SK-N-SH (cell line): ENCODE measurements at regions of chr5 and their contacts with region 1.

Region 1: GRCh38 chr5:180161420-180162303 is 47.3 kb downstream of the RASGEF1C start:
- DNase-seq: peak; percentile 80
- H3K4me3 ChIP-seq: peak overlapping the region in 1 of 2 experiments; percentile 19; a peak in 1 of 4 replicates
- H3K27ac ChIP-seq: no peak overlapping the region
- H3K4me1 ChIP-seq: peaks cover 0 to 11% of the 10 kb centered on the region in 2 experiments; a peak in 1 of 4 replicates
- H3K27me3 ChIP-seq: no peaks in the 10 kb centered on the region
- CTCF ChIP-seq: no peak
- EP300 ChIP-seq: no peak
- RAD21 ChIP-seq: peak; percentile 66

Region 2: GRCh38 chr5:180172450-180173197 is 11.0 kb after region 1 on chr5:
- CTCF ChIA-PET with region 1: interaction called, 10 read pairs
- POLR2A ChIA-PET with region 1: no interaction called
- DNase-seq: peak; percentile 82
- H3K4me3 ChIP-seq: no peak overlapping the region
- H3K27ac ChIP-seq: peak overlapping the region in 1 of 2 experiments; percentile 6; a peak in 1 of 4 replicates
- H3K4me1 ChIP-seq: peaks cover 0 to 24% of the 10 kb centered on the region in 2 experiments; a peak in 1 of 4 replicates
- H3K27me3 ChIP-seq: no peaks in the 10 kb centered on the region
- CTCF ChIP-seq: no peak
- EP300 ChIP-seq: no peak
- RAD21 ChIP-seq: no peak

Region 3: GRCh38 chr5:180201051-180201987 is 39.7 kb after region 1 on chr5:
- CTCF ChIA-PET with region 1: interaction called, 52 read pairs
- POLR2A ChIA-PET with region 1: no interaction called
- DNase-seq: peak; percentile 66
- H3K4me3 ChIP-seq: no peak overlapping the region
- H3K27ac ChIP-seq: no peak overlapping the region
- H3K4me1 ChIP-seq: no peaks in the 10 kb centered on the region
- H3K27me3 ChIP-seq: no peaks in the 10 kb centered on the region
- CTCF ChIP-seq: peak; percentile 37
- EP300 ChIP-seq: no peak
- RAD21 ChIP-seq: peak; percentile 57